Naive thymus-derived CD4-positive, alpha-beta T cell (primary cell): ENCODE measurements at regions of chr17 and their contacts with region 1.

Region 1: GRCh38 chr17:68491381-68492231 is 20.6 kb upstream of the PRKAR1A start:
- DNase-seq: no peak
- ATAC-seq: peak; percentile 68
- H3K4me3 ChIP-seq: no peak overlapping the region
- H3K4me3 Mint-ChIP-seq: peak overlapping the region in 1 of 10 donors; percentile 39
- H3K27ac ChIP-seq: no peak overlapping the region
- H3K27ac Mint-ChIP-seq: no peak overlapping the region
- H3K4me1 ChIP-seq: peaks cover 6% of the 10 kb centered on the region in 2 donors
- H3K4me1 Mint-ChIP-seq: peaks cover 10 to 27% (median 13%) of the 10 kb centered on the region in 7 donors
- H3K27me3 ChIP-seq: no peaks in the 10 kb centered on the region
- H3K27me3 Mint-ChIP-seq: peaks cover 0 to 13% (median 0%) of the 10 kb centered on the region in 5 donors

Region 2: DNA sequence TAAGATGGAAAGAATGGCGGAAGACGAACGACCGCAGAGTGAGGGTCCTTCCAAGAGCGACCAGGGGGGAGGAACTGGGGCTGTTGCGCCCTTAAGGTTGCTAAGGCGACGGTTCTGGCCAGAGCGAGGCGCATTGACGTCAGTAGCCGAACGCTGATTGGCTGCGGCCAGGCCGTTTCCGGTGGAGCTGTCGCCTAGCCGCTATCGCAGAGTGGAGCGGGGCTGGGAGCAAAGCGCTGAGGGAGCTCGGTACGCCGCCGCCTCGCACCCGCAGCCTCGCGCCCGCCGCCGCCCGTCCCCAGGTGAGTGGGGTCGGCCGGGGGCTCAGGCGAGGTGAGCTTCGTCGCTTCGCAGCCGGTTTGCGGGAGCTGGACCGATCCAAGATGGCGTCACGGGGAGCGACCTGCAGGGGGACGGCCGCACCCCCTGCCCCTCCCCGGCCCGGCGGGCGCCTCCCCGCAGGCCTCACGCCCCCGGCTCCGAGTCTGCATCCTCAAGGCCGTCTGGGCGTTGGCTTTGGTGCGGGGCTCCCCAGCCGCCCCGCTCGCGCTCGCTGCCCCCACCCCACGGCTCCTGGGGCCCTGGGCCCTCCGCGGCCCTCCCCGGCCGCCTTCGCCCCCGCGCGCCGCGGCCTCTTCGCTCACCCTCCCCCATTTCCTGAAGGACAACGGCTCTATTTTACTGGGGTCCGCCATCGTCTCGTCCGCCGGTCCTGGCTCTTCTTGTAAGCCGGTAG is 20.8 kb after region 1 on chr17 and contains the start of gene PRKAR1A:
- CTCF ChIA-PET with region 1: no interaction called
- POLR2A ChIA-PET with region 1: interaction called, 3 read pairs
- intact Hi-C with region 1: loop called in 1 of 2 experiments (anchors 1 kb)
- DNase-seq: peak; percentile 84 to 96 (median 94)
- ATAC-seq: peak; percentile 92
- H3K4me3 ChIP-seq: peak within 1 kb of the TSS; percentile 97
- H3K4me3 Mint-ChIP-seq: peak within 1 kb of the TSS; percentile 89 to 100 (median 100)
- H3K27ac ChIP-seq: peak within 1 kb of the TSS; percentile 98
- H3K27ac Mint-ChIP-seq: peak within 1 kb of the TSS; percentile 91 to 100 (median 100)
- H3K4me1 ChIP-seq: peaks cover 13 to 22% of the 10 kb centered on the region in 2 donors
- H3K4me1 Mint-ChIP-seq: peaks cover 34 to 74% (median 51%) of the 10 kb centered on the region in 7 donors
- H3K27me3 ChIP-seq: no peaks in the 10 kb centered on the region
- H3K27me3 Mint-ChIP-seq: no peaks in the 10 kb centered on the region
- total RNA-seq, gene PRKAR1A: 115 to 224 (median 156) TPM